ENCODE measurements at regions of chr19 and their contacts with region 1.

Region 1: GRCh38 chr19:40285353-40286234 is 449 bp upstream of the AKT2 start:
- DNase-seq: peak; percentile 98 to 99 (median 99)
- ATAC-seq: peak; percentile 96 to 99 (median 97)
- H3K4me3 ChIP-seq: peak overlapping the region; percentile 73 to 99 (median 87)
- H3K27ac ChIP-seq: peak overlapping the region; percentile 87 to 99 (median 96)
- H3K4me1 ChIP-seq: peaks cover 0 to 50% (median 43%) of the 10 kb centered on the region in 12 donors
- H3K27me3 ChIP-seq: no peaks in the 10 kb centered on the region
- CTCF ChIP-seq: peak in 1 of 12 donors; percentile 18
- POLR2A ChIP-seq: peak in 1 of 2 donors; percentile 34

Region 2: GRCh38 chr19:40241809-40242384 is 43.7 kb before region 1 on chr19:
- intact Hi-C with region 1: loop called in 3 of 10 experiments (anchors 5 kb)
- DNase-seq: peak; percentile 70 to 79 (median 77)
- ATAC-seq: peak; percentile 55 to 92 (median 88)
- H3K4me3 ChIP-seq: peak overlapping the region in 1 of 12 donors; percentile 1
- H3K27ac ChIP-seq: peak overlapping the region in 11 of 12 donors; percentile 29 to 72 (median 59)
- H3K4me1 ChIP-seq: peaks cover 0 to 45% (median 23%) of the 10 kb centered on the region in 12 donors
- H3K27me3 ChIP-seq: no peaks in the 10 kb centered on the region
- CTCF ChIP-seq: no peak
- POLR2A ChIP-seq: no peak

Region 3: DNA sequence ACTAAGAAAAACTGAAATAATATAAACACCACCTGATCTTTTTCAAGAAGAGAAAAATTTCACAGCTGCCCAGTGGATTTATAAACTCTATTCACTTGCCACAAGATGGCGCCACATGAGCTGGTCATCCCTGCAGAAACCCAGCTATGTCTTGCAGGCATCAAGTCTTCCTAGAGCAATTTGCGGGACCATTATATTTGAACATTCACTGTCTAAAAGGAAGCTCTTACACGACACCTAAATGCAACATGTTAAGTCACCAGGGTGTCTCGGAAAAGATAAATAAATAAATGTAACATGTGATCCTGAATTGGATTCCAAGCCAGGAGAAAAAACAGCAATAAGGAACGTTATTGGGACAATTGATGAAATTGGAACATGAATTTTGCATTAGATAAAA is 19.8 kb after region 1 on chr19:
- intact Hi-C with region 1: no loop called
- DNase-seq: peak; percentile 81 to 83 (median 82)
- ATAC-seq: peak; percentile 58 to 83 (median 75)
- H3K4me3 ChIP-seq: no peak overlapping the region
- H3K27ac ChIP-seq: no peak overlapping the region
- H3K4me1 ChIP-seq: peaks cover 0 to 5% (median 0%) of the 10 kb centered on the region in 12 donors
- H3K27me3 ChIP-seq: no peaks in the 10 kb centered on the region
- CTCF ChIP-seq: peak; percentile 63 to 86 (median 77)
- POLR2A ChIP-seq: no peak

Measured in heart left ventricle (tissue), 16 donors.